Activated naive CD4-positive, alpha-beta T cell treated with anti-CD3 and anti-CD28 coated beads for 36 hours (primary cell): ENCODE measurements at regions of chr16 and their contacts with region 1.

Region 1: DNA sequence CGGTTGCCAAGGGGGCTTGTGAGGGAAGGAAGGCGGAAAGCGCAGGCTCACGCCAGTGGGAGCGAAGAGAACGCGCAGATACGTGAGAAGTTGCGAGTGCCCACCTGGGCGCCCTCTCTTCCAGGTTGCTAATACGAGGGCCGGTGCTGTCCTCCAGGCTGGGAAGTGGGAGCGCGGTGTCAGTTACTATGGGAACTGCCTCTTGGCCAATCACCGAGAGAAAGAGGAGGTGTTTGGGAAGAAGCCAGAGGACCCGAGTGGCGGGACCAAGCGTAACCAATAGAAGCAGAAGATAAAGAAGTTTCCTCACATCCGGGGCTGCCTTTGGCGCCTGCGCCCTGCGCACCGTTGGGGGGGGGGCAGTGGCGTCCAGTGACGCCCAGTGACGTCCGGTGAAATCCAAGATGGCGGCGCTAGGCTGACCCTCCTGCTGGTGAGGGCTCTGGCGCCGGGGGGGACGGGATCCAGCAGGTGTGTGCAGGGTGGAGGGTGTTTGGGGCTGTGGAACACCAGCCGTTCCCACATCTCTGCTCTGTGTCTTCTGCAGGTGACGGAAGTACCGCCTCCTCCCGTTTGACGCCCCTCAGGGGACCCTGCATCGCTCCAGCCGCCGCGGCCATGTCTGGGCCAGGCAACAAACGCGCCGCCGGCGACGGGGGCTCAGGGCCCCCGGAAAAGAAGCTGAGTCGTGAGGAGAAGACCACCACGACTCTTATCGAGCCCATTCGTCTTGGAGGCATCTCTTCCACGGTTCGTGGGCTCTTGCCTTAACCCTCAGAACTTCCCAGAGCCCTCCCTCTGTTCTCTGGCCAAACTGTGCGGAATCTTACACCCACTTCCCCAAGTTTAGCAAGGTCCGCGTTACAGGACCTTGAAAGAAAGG is at the starts of genes CFAP119 and RNF40:
- DNase-seq: peak; percentile 95
- H3K4me3 Mint-ChIP-seq: peak within 1 kb of the TSS; percentile 94
- H3K27ac Mint-ChIP-seq: peak within 1 kb of the TSS; percentile 87
- H3K4me1 Mint-ChIP-seq: peaks cover 25% of the 10 kb centered on the region
- H3K27me3 Mint-ChIP-seq: no peaks in the 10 kb centered on the region
- total RNA-seq, gene CFAP119: 2.0 to 2.3 TPM
- total RNA-seq, gene RNF40: 51.1 to 61.0 TPM

Region 2: GRCh38 chr16:30747799-30748634 is 14.2 kb before region 1 on chr16 and contains the start of gene PHKG2:
- CTCF ChIA-PET with region 1: no interaction called
- intact Hi-C with region 1: loop called (anchors 1 kb)
- DNase-seq: peak; percentile 99
- H3K4me3 Mint-ChIP-seq: peak within 1 kb of the TSS; percentile 89
- H3K27ac Mint-ChIP-seq: peak within 1 kb of the TSS; percentile 86
- H3K4me1 Mint-ChIP-seq: peaks cover 19% of the 10 kb centered on the region
- H3K27me3 Mint-ChIP-seq: no peaks in the 10 kb centered on the region
- total RNA-seq, gene PHKG2: 23.3 to 26.4 TPM

Region 3: GRCh38 chr16:30775392-30776188 is 13.4 kb after region 1 on chr16:
- CTCF ChIA-PET with region 1: interaction called, 5 read pairs
- intact Hi-C with region 1: loop called (anchors 1 kb)
- DNase-seq: peak; percentile 78
- H3K4me3 Mint-ChIP-seq: peak overlapping the region; percentile 95
- H3K27ac Mint-ChIP-seq: peak overlapping the region; percentile 93
- H3K4me1 Mint-ChIP-seq: peaks cover 17% of the 10 kb centered on the region
- H3K27me3 Mint-ChIP-seq: no peaks in the 10 kb centered on the region

Region 4: DNA sequence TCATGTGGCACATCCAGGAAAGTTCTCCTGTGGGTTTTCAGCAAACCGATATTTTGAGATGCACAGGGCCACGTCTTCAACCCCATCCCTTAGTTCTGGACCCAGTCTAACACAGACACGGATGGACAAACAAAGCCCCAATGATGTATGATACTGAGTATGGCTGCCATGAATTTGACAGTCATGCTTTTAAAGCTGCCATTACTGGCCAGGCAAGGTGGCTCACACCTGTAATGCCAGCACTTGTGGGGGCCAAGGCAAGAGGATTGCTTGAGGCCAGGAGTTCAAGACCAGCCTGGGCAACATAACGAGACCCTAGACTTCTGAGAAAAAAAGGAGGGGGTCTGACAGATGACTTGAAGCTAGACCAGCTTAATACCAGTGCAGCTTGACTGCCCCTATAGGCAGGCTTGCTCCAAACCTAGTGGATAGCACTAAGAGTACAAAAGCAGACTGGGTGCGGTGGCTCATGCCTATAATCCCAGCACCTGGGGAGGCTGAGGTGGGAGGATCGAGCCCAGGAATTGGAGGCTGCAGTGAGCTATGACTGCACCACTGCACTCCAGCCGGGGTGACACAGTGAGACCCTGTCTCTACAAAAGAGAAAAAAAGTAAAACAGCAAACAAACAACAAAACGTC is 35.6 kb after region 1 on chr16:
- CTCF ChIA-PET with region 1: no interaction called
- intact Hi-C with region 1: no loop called
- DNase-seq: no peak
- H3K4me3 Mint-ChIP-seq: no peak overlapping the region
- H3K27ac Mint-ChIP-seq: no peak overlapping the region
- H3K4me1 Mint-ChIP-seq: no peaks in the 10 kb centered on the region
- H3K27me3 Mint-ChIP-seq: no peaks in the 10 kb centered on the region

Region 5: GRCh38 chr16:30874821-30875717 is 112.9 kb after region 1 on chr16:
- CTCF ChIA-PET with region 1: no interaction called
- intact Hi-C with region 1: loop called (anchors 1 kb)
- DNase-seq: peak; percentile 90
- H3K4me3 Mint-ChIP-seq: peak overlapping the region; percentile 92
- H3K27ac Mint-ChIP-seq: peak overlapping the region; percentile 96
- H3K4me1 Mint-ChIP-seq: peaks cover 40% of the 10 kb centered on the region
- H3K27me3 Mint-ChIP-seq: no peaks in the 10 kb centered on the region

Region 6: GRCh38 chr16:30893744-30894539 is 131.8 kb after region 1 on chr16 and contains the start of gene BCL7C:
- CTCF ChIA-PET with region 1: no interaction called
- intact Hi-C with region 1: loop called (anchors 1 kb)
- DNase-seq: peak; percentile 90
- H3K4me3 Mint-ChIP-seq: peak within 1 kb of the TSS; percentile 84
- H3K27ac Mint-ChIP-seq: peak within 1 kb of the TSS; percentile 78
- H3K4me1 Mint-ChIP-seq: peaks cover 39% of the 10 kb centered on the region
- H3K27me3 Mint-ChIP-seq: no peaks in the 10 kb centered on the region
- total RNA-seq, gene BCL7C: 18.1 to 18.6 TPM